Mammary epithelial cell (primary cell): ENCODE measurements at regions of chr6 and their contacts with region 1.

Region 1: DNA sequence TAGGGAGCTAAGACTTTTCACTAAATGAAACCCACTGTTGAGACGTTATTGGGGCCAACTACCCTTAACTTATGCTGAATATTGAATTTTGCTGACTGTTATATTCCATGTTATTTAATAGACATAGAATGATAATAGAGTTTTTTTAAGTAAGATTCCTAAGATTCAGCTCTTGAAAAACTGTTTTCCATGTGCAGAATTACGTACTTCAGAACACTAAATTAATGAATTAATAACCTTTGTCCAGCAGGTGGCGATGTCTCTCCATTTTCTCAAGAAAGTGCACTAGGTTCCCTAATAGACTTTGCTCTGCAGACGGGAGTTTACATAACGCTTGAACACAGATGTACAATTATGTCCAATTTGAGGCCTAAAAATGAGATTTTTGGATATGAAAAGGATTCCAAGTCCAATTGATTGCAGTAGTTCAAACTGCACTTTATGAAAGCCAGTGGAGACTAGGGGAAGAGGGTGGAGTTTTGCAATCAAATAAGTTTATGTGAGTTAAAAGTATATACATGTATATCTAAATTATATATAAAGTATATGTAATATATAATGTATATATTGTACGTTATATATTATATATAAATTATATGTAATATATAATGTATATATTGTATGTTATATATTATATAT is 282.1 kb downstream of the UST start:
- DNase-seq: peak; percentile 61
- H3K4me3 ChIP-seq: no peak overlapping the region
- H3K27ac ChIP-seq: no peak overlapping the region
- H3K4me1 ChIP-seq: peaks cover 9% of the 10 kb centered on the region
- H3K27me3 ChIP-seq: no peaks in the 10 kb centered on the region
- CTCF ChIP-seq: peak; percentile 52 to 69

Region 2: DNA sequence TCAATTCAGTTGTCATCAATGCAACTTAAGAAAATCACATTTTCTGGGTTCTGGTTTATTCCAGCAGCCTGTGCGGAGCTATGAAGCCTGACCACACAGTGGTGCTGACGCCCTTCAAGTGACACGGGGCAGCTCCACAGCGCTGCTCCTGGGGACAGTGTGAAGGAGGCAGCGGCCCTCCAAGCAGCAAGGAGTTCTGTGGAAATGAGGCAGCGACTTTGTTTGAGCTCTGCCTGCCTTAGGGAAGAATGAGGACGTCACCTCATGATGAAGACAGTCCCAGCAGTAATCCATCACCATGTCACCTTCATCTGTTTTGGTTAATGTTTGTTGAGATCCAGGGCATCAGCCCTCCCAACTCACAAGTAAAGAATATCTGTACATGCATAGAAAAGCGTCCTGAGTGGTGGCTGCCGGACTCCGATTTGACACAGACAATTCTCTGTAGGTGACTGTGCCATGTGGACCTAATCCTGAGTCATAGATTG is 450.6 kb before region 1 on chr6:
- CTCF ChIA-PET with region 1: interaction called, 6 read pairs
- dilution Hi-C with region 1: no loop called
- in situ Hi-C with region 1: no loop called
- intact Hi-C with region 1: loop called (anchors 1 kb)
- DNase-seq: peak; percentile 53
- H3K4me3 ChIP-seq: no peak overlapping the region
- H3K27ac ChIP-seq: no peak overlapping the region
- H3K4me1 ChIP-seq: no peaks in the 10 kb centered on the region
- H3K27me3 ChIP-seq: no peaks in the 10 kb centered on the region
- CTCF ChIP-seq: peak; percentile 64 to 95

Region 3: DNA sequence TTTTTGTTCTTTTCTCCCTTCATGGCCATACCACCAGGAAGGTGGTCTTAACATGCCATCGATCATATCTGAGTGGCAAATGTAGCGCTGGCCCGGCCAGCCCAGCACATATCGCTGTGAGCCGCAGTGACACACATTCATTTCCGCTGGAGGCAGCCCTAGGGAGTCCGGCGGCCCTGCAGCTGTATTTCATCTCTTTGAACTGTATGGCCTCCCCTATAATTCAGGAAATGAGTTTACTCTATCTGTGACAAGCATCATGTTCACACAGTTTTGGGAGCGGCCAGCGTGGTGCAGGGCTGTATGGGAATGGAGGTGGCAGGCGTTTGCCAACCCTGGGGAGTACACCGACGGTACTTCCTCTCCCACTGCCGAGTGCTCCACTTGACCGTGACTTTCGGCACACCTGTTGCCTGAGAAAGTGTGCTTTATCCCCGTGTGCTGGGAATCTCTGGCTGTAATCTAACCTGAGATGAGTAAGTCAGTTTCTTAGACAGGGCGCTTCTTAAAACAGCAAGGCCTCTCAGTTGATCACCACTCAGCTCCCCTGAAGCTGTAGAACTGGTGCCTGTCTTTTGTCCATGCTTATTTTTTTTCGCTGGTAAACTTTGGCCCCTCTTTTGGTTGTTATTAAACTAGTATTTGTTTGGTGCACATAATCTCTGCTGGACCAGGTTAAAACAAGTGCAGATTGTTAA is 31.6 kb after region 1 on chr6:
- CTCF ChIA-PET with region 1: no interaction called
- dilution Hi-C with region 1: no loop called
- in situ Hi-C with region 1: no loop called
- intact Hi-C with region 1: loop called (anchors 1 kb)
- DNase-seq: no peak
- H3K4me3 ChIP-seq: no peak overlapping the region
- H3K27ac ChIP-seq: no peak overlapping the region
- H3K4me1 ChIP-seq: no peaks in the 10 kb centered on the region
- H3K27me3 ChIP-seq: no peaks in the 10 kb centered on the region
- CTCF ChIP-seq: no peak

Region 4: GRCh38 chr6:149098700-149099276 is 69.9 kb after region 1 on chr6:
- CTCF ChIA-PET with region 1: no interaction called
- dilution Hi-C with region 1: no loop called
- in situ Hi-C with region 1: no loop called
- intact Hi-C with region 1: no loop called
- DNase-seq: no peak
- H3K4me3 ChIP-seq: no peak overlapping the region
- H3K27ac ChIP-seq: no peak overlapping the region
- H3K4me1 ChIP-seq: no peaks in the 10 kb centered on the region
- H3K27me3 ChIP-seq: no peaks in the 10 kb centered on the region
- CTCF ChIP-seq: no peak

Region 5: GRCh38 chr6:149190224-149190831 is 161.4 kb after region 1 on chr6:
- CTCF ChIA-PET with region 1: no interaction called
- dilution Hi-C with region 1: no loop called
- in situ Hi-C with region 1: no loop called
- intact Hi-C with region 1: loop called (anchors 1 kb)
- DNase-seq: peak; percentile 57
- H3K4me3 ChIP-seq: no peak overlapping the region
- H3K27ac ChIP-seq: no peak overlapping the region
- H3K4me1 ChIP-seq: no peaks in the 10 kb centered on the region
- H3K27me3 ChIP-seq: no peaks in the 10 kb centered on the region
- CTCF ChIP-seq: peak; percentile 40 to 59

Region 6: DNA sequence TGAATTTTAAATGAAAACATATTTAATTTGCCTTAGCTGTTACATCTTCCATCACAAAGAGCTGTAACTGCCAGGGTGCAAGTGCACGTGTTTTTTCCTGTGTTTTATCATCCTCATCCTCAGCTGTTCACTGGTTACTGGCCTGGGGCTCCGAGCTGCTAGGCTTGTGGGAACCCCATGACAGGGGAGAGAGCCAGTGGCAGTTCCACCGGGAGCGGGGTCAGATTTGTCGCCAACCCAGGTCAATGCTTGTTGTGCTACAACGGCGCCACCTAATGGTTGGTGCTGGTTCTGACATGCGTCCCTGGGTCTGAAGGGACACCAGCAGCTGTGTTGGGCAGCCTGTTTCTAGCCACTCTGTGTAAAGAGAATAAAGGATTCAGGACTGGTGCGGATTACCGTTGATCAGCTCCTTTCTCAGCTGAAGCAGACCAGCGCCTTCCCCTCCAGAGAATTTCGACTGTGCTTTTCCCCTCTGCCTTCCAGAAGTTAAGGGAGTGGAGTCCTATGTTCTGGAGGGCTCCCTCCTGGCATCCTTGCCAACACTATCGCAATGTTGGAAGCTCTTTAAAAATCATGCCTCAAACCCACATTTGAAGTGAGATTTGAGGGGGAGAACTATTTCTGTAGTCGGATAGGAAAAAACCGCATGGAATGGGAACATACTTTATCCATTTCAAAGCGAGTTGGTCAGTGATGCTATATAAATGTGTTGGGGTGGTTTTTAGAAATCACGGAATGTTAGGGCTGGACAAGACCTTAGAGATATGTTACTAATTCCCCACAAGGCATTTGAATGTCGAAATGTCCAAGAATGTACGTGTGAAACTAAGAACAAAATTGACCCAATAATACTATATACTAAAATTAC is 403.3 kb after region 1 on chr6:
- CTCF ChIA-PET with region 1: interaction called, 4 read pairs
- dilution Hi-C with region 1: no loop called
- in situ Hi-C with region 1: loop called in 1 of 2 experiments (anchors 5 kb)
- intact Hi-C with region 1: loop called (anchors 1 kb)
- DNase-seq: peak; percentile 65
- H3K4me3 ChIP-seq: peak overlapping the region in 1 of 3 experiments; percentile 17
- H3K27ac ChIP-seq: no peak overlapping the region
- H3K4me1 ChIP-seq: no peaks in the 10 kb centered on the region
- H3K27me3 ChIP-seq: no peaks in the 10 kb centered on the region
- CTCF ChIP-seq: peak; percentile 82 to 89